ENCODE measurements at regions of chr16 and their contacts with region 1.

Region 1: DNA sequence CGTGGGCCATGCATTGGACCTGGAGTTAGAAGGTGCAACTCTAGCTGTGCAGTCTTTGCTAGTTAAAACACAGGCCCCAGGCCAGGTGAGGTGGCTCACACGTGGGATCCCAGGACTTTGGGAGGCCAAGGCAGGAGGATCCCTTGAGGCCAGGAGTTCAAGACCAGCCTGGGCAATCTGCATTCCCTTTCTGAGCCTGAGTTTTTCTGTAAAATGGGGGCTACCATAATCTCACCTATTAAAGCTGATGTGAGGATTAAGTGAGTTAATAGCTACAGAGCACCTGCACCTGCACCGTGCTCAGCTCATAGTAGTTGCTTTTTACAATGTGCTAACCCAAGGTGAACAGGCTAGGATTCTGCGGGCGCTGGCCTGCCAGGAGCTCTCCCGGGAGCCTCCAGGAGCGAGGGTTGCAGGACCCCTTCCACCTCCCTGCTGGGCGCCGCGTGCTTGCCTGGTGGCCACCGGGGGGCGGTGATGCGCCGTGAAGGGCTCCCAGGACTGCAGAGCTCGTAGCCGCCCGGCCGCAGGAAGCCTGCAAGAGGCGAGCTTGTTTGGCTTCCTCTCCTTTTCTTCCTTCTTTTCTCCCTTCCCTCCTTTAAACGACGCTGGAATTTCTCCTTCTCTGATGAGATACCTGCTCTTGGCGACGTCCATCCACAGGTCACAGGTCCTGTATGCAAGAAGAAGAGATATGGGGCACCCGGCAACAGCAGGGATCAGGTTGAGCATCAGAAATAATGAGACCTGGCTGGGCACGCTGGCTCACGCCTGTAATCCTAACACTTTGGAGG is 51.3 kb downstream of the ZFP90 start:
- DNase-seq: peak; percentile 89
- ATAC-seq: peak; percentile 99
- H3K4me3 Mint-ChIP-seq: no peak overlapping the region
- H3K27ac Mint-ChIP-seq: no peak overlapping the region
- H3K4me1 Mint-ChIP-seq: peaks cover 2% of the 10 kb centered on the region
- H3K27me3 Mint-ChIP-seq: no peaks in the 10 kb centered on the region

Region 2: DNA sequence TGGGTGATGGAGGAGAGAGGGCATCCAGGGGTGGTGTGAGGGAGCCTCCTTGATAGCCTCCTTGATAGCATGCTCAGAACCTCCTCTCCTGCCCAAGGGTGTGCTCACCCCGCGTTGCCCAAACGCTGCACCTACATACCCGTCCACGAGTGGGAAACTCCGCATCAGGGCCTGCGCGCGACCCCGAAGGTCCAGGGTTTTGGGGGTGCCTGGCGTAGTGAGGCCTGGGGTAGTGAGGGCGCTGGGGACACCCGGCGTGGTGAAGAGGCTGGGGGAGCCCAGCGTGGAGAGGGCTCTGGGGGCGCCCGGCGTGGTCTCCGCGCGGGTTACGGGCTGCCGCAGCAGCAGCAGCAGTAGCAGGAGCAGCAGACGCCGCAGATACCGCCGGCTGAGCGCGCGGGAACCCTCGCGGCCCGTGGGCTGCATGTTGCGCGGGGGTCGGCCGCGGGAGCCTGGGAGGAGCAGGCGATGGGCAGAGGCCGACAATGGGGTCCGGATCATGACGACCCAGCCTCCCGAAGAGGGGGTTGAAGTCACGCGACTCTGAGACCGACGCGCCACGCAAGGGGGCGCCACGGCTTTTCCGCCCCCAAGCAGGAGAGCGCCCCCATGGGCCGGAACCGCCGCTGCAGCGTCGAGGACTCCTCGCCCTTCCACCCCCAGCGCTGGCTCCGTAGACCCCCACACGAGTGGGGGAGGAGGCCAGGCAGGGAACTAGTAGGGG is 610.3 kb before region 1 on chr16 and contains the start of gene DPEP3:
- CTCF ChIA-PET with region 1: no interaction called
- POLR2A ChIA-PET with region 1: no interaction called
- intact Hi-C with region 1: no loop called
- DNase-seq: peak; percentile 44
- ATAC-seq: no peak
- H3K4me3 Mint-ChIP-seq: no peak within 1 kb of the TSS
- H3K27ac Mint-ChIP-seq: no peak within 1 kb of the TSS
- H3K4me1 Mint-ChIP-seq: peaks cover 25% of the 10 kb centered on the region
- H3K27me3 Mint-ChIP-seq: no peaks in the 10 kb centered on the region
- total RNA-seq, gene DPEP3: 0.11 TPM in 1 of 2 experiments, not detected in the other

Region 3: GRCh38 chr16:68520649-68521086 is 69.7 kb before region 1 on chr16:
- CTCF ChIA-PET with region 1: interaction called, 13 read pairs
- POLR2A ChIA-PET with region 1: no interaction called
- intact Hi-C with region 1: loop called in 1 of 2 experiments (anchors 5 kb)
- DNase-seq: peak; percentile 94
- ATAC-seq: peak; percentile 99
- H3K4me3 Mint-ChIP-seq: peak overlapping the region; percentile 11
- H3K27ac Mint-ChIP-seq: peak overlapping the region; percentile 19
- H3K4me1 Mint-ChIP-seq: peaks cover 4% of the 10 kb centered on the region
- H3K27me3 Mint-ChIP-seq: peaks cover 2% of the 10 kb centered on the region

Region 4: GRCh38 chr16:68668266-68668665 is 77.9 kb after region 1 on chr16:
- CTCF ChIA-PET with region 1: interaction called, 11 read pairs
- POLR2A ChIA-PET with region 1: no interaction called
- intact Hi-C with region 1: no loop called
- DNase-seq: peak; percentile 69
- ATAC-seq: peak; percentile 98
- H3K4me3 Mint-ChIP-seq: no peak overlapping the region
- H3K27ac Mint-ChIP-seq: peak overlapping the region; percentile 76
- H3K4me1 Mint-ChIP-seq: peaks cover 22% of the 10 kb centered on the region
- H3K27me3 Mint-ChIP-seq: peaks cover 5% of the 10 kb centered on the region

Region 5: DNA sequence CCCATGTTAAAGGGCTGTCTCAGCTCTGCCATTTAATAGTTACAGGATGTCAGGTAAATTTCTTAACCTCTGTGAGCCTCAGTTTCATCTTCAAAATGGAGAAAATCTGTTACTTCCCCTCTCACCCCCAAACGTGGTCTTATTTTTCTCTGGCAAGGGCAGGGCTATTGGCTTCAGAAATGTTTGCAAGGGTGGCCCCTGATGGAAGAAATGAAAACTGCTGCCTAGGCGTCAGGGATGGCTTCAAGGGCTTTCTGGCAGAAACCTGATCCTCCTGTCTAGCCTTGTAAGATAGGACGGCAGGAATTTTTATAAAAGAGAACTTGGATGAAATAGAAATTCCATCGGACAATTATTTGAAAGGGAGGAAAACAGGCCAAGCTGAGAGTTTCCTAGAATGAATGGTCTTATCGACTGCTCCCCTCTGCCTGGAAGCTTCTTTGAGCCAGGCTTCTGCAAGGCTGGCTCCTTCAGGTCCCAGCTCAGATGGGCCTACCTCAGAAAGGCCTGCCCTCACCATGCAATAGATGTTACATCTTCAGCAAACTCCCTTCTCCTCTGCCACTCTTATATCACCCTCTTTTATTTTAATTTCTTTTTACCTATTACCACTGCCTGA is 210.0 kb after region 1 on chr16:
- CTCF ChIA-PET with region 1: interaction called, 18 read pairs
- POLR2A ChIA-PET with region 1: no interaction called
- intact Hi-C with region 1: loop called (anchors 2 kb)
- DNase-seq: peak; percentile 82
- ATAC-seq: peak; percentile 98
- H3K4me3 Mint-ChIP-seq: no peak overlapping the region
- H3K27ac Mint-ChIP-seq: no peak overlapping the region
- H3K4me1 Mint-ChIP-seq: peaks cover 11% of the 10 kb centered on the region
- H3K27me3 Mint-ChIP-seq: no peaks in the 10 kb centered on the region

Region 6: GRCh38 chr16:69105489-69106361 is 515.3 kb after region 1 on chr16 and contains the start of gene HAS3:
- CTCF ChIA-PET with region 1: interaction called, 4 read pairs
- POLR2A ChIA-PET with region 1: no interaction called
- intact Hi-C with region 1: loop called in 1 of 2 experiments (anchors 5 kb)
- DNase-seq: peak; percentile 67
- ATAC-seq: peak; percentile 82
- H3K4me3 Mint-ChIP-seq: peak within 1 kb of the TSS; percentile 72
- H3K27ac Mint-ChIP-seq: peak within 1 kb of the TSS; percentile 76
- H3K4me1 Mint-ChIP-seq: peaks cover 16% of the 10 kb centered on the region
- H3K27me3 Mint-ChIP-seq: peaks cover 24% of the 10 kb centered on the region
- total RNA-seq, gene HAS3: 0.39 to 0.42 TPM

Measured in activated CD4-positive, alpha-beta T cell treated with anti-CD3 and anti-CD28 coated beads for 36 hours (primary cell).